ENCODE measurements at regions of chr20 and their contacts with region 1.

Region 1: DNA sequence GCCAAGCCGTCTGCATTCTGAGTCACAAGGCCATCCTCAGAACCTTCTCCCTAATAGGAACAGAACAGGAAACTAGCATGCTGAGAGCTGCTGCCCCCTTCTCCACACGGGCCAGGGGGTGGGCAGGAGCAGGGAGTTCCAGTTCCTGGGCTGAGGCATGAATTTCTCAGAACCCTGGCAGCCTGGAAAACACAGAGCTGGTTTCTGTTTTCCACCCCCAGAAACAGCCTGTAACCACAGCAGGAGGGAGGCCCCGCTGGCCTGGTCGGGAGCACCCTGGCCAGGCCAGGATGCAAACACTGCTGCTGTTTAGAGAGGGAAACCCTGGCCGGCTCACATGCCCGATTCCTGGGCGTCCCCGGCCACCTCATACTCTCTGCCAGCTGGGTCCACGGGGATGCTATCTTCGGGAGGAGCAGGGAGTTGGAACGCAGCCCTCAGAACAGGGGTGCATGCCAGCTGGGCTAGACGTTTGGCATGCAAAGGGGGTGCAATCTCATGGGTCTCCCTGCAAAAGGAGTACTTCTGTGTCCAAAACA is 130.1 kb downstream of the NFATC2 start:
- DNase-seq: no peak
- ATAC-seq: peak; percentile 85

Region 2: DNA sequence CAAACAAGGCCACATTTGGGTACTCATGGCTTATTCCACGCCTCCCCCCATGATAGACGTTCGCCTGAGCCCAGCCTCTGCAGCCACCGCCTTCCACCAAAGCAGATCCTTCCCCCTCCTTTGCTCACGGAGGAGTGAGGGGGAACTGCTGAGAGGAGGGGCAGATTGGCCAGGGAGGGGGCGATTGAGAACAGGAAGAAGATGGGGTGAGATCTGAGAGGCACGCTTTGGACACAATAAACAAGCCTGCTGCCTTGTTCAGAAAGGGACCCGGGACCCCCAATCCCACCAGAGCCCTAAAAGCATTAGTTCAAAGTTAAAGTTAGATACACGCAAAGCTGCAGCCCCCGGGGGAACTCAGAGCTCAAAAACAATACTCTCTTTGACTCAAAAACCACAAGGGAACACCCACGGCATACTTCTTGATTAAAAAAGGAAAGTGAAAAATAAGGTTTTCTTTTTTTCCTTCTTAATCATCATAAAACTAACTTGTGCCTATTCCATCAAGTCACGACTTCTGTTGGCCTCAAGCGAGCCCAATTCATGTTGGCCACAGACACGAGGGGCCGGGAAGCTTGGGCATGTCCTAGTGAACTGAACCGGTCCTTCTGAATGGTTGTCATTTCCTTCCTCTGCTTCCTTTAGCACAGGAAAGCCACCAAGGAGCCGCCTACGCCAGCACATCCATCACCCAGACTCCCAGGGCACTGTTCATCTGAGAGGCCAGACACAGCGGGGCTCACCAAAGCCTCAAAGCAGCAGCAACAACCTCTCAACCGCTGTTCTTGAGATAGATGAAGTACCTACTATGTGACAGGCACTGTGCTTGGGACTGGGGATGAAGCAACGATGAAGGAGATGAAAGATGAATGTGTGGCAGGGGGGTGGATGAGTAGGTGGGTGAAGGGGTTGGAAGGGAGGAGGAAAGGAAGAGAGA is 85.4 kb after region 1 on chr20:
- intact Hi-C with region 1: loop called (anchors 10 kb)
- DNase-seq: no peak
- ATAC-seq: no peak

Region 3: GRCh38 chr20:51512645-51513044 is 100.2 kb after region 1 on chr20:
- intact Hi-C with region 1: no loop called
- DNase-seq: no peak
- ATAC-seq: no peak